ENCODE measurements at regions of chr12 and their contacts with region 1.

Region 1: DNA sequence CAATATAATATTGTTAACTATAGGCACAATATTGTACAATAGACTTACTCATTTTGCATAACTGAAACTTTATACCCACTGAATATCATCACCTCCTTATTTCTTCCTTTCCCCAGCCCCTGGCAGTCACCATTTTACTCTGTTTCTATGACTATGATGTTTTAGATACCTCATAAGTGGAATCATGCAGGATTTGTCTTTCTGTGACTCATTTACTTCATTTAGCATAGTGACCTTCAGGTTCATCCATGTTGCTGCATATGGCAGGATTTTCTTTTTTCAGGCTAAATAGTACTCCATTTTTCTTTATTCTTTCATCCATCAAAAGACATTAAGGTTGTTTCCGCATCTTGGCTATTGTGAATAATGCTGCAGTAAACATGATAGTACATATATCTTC is 18.9 kb downstream of the USP15 start:
- DNase-seq: no peak
- ATAC-seq: no peak
- H3K4me3 ChIP-seq: no peak overlapping the region
- H3K4me3 Mint-ChIP-seq: no peak overlapping the region
- H3K27ac ChIP-seq: no peak overlapping the region
- H3K27ac Mint-ChIP-seq: no peak overlapping the region
- H3K4me1 ChIP-seq: peaks cover 20 to 28% of the 10 kb centered on the region in 2 donors
- H3K4me1 Mint-ChIP-seq: peaks cover 75% of the 10 kb centered on the region
- H3K27me3 ChIP-seq: no peaks in the 10 kb centered on the region
- H3K27me3 Mint-ChIP-seq: no peaks in the 10 kb centered on the region
- CTCF ChIP-seq: no peak

Region 2: GRCh38 chr12:62313727-62314380 is 34.8 kb after region 1 on chr12:
- CTCF ChIA-PET with region 1: no interaction called
- POLR2A ChIA-PET with region 1: no interaction called
- intact Hi-C with region 1: loop called (anchors 5 kb)
- DNase-seq: no peak
- ATAC-seq: no peak
- H3K4me3 ChIP-seq: no peak overlapping the region
- H3K4me3 Mint-ChIP-seq: no peak overlapping the region
- H3K27ac ChIP-seq: peak overlapping the region in 1 of 2 donors; percentile 4
- H3K27ac Mint-ChIP-seq: no peak overlapping the region
- H3K4me1 ChIP-seq: peaks cover 0 to 13% of the 10 kb centered on the region in 2 donors
- H3K4me1 Mint-ChIP-seq: peaks cover 41% of the 10 kb centered on the region
- H3K27me3 ChIP-seq: no peaks in the 10 kb centered on the region
- H3K27me3 Mint-ChIP-seq: no peaks in the 10 kb centered on the region
- CTCF ChIP-seq: no peak